ENCODE measurements at regions of chr10 and their contacts with region 1.

Region 1: DNA sequence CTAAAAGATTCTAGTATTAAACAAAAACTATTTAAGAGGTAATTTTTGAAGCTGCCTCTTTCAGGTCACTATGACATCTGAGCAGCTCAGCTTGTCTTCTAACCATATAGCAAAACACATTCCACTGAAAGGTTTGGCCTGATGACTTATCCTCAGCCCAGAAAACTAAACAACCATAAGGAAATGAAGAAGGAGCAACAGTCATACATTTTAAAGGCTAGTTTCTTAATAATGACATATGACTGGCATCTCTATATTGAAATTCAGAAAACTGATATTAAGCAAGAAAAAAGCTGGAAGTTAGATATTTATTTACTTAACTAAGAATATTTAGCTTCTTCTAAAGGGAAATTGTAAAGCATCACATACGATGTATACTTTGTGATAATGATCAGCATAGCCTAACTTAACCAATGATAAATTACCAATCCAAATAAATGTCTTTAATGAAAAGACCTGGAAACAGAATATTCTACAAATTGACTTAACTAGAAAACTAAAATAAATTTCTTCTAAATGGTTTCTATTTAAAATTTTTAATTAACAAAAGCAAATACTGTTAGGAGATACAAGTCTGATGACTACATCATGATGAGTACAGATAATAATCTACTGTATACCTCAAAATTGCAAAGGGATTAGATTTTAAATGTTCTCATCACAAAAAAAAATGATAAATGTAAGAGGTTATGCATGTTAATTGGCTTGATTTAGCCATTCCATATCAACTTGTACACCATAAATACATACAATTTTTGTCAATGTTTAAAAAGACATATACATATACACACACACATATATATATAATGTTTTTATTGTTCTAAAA is 24.4 kb downstream of the NT5C2 start:
- H3K4me3 Mint-ChIP-seq: no peak overlapping the region
- H3K27ac Mint-ChIP-seq: no peak overlapping the region
- H3K4me1 Mint-ChIP-seq: no peaks in the 10 kb centered on the region
- H3K27me3 Mint-ChIP-seq: no peaks in the 10 kb centered on the region

Region 2: GRCh38 chr10:102951316-102951715 is 217.4 kb before region 1 on chr10:
- intact Hi-C with region 1: no loop called
- H3K4me3 Mint-ChIP-seq: no peak overlapping the region
- H3K27ac Mint-ChIP-seq: no peak overlapping the region
- H3K4me1 Mint-ChIP-seq: no peaks in the 10 kb centered on the region
- H3K27me3 Mint-ChIP-seq: no peaks in the 10 kb centered on the region

Region 3: GRCh38 chr10:103096153-103096552 is 72.5 kb before region 1 on chr10:
- intact Hi-C with region 1: loop called (anchors 10 kb)
- H3K4me3 Mint-ChIP-seq: no peak overlapping the region
- H3K27ac Mint-ChIP-seq: no peak overlapping the region
- H3K4me1 Mint-ChIP-seq: no peaks in the 10 kb centered on the region
- H3K27me3 Mint-ChIP-seq: no peaks in the 10 kb centered on the region

Region 4: DNA sequence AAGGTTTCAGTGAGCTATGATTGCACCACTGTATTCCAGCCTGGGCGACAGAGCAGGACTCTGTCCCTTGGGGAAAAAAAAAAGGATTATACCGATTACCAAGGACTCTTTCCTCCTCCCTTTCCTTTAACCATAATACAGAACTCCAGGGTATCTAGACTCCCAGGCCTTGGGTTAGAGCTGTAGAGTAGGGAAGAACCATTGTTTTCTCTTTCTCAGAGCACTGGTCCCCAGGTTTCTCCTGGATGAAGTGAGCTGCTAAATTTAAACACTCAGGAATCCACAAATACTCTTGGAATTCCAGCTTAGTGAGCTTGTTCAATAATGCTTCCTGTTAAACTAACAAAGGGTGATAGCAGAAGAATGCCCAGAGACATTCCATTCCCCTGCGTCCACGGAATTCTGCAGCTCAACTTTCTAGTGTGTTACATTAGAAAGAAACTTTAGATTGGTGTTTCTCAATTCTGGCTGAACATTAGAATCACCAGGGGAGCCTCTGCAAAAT is 62.4 kb after region 1 on chr10:
- intact Hi-C with region 1: no loop called
- H3K4me3 Mint-ChIP-seq: no peak overlapping the region
- H3K27ac Mint-ChIP-seq: no peak overlapping the region
- H3K4me1 Mint-ChIP-seq: peaks cover 22% of the 10 kb centered on the region
- H3K27me3 Mint-ChIP-seq: peaks cover 5% of the 10 kb centered on the region